Activated B cell treated with CpG ODN at 0.5 μM for 24 hours (primary cell): ENCODE measurements at regions of chr11 and their contacts with region 1.

Region 1: GRCh38 chr11:9757809-9758636 is 94.1 kb downstream of the SWAP70 start:
- DNase-seq: peak; percentile 96
- ATAC-seq: peak; percentile 59
- H3K4me3 Mint-ChIP-seq: peak overlapping the region; percentile 87
- H3K27ac Mint-ChIP-seq: peak overlapping the region; percentile 98
- H3K4me1 Mint-ChIP-seq: peaks cover 81% of the 10 kb centered on the region
- H3K27me3 Mint-ChIP-seq: no peaks in the 10 kb centered on the region
- CTCF ChIP-seq: peak; percentile 47

Region 2: GRCh38 chr11:8911029-8911826 is 846.8 kb before region 1 on chr11 and contains the start of gene AKIP1:
- CTCF ChIA-PET with region 1: no interaction called
- POLR2A ChIA-PET with region 1: no interaction called
- intact Hi-C with region 1: loop called (anchors 5 kb)
- DNase-seq: peak; percentile 70
- ATAC-seq: peak; percentile 77
- H3K4me3 Mint-ChIP-seq: peak within 1 kb of the TSS; percentile 89
- H3K27ac Mint-ChIP-seq: peak within 1 kb of the TSS; percentile 59
- H3K4me1 Mint-ChIP-seq: peaks cover 37% of the 10 kb centered on the region
- H3K27me3 Mint-ChIP-seq: no peaks in the 10 kb centered on the region
- CTCF ChIP-seq: no peak
- total RNA-seq, gene AKIP1: 7.1 and 9.0 TPM in 2 replicates

Region 3: DNA sequence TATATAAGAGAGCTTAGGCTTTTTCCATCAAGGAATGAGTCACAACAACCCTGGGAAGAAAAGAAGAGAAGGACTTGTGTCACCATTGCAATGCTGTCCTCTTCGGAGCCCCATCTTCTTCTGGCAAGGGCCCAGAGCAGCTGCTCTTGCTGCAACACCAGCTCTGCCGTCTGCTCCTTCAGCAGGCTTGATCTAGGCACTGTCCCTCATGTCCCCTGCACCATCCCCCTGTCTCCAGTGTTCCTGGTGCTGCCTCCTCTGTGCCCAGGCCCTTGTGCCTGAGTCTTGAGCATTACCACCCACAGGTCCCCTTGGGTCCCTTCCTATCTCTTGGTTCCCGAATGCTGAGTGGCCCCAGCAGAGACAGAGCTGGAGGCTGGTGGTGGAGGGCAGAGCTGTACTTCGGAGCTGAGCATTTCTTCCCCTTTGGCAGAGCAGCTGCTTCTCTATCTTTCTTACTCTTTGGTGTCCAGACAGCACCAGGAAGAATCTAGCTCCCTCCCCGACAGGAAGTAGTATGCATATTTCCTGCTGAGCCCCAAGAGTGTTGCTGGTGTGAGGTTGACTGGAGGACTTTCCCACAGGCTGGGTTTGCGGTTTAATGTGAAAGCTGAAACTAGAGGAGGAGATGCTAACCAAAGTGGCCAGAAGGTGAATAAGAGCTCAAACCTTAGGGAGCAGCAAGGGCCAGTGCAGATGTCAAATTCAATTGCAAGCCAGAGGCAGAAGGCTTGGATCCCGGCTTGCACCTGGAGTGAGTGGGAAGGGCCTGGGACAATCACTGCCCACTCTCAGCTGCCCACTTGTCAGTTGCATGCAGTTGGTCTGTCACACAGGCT is 156.8 kb before region 1 on chr11:
- CTCF ChIA-PET with region 1: interaction called, 7 read pairs
- POLR2A ChIA-PET with region 1: interaction called, 19 read pairs
- intact Hi-C with region 1: no loop called
- DNase-seq: peak; percentile 53
- ATAC-seq: peak; percentile 76
- H3K4me3 Mint-ChIP-seq: peak overlapping the region; percentile 85
- H3K27ac Mint-ChIP-seq: peak overlapping the region; percentile 96
- H3K4me1 Mint-ChIP-seq: peaks cover 59% of the 10 kb centered on the region
- H3K27me3 Mint-ChIP-seq: no peaks in the 10 kb centered on the region
- CTCF ChIP-seq: no peak

Region 4: GRCh38 chr11:10076458-10077141 is 318.6 kb after region 1 on chr11:
- CTCF ChIA-PET with region 1: interaction called, 21 read pairs
- POLR2A ChIA-PET with region 1: interaction called, 4 read pairs
- intact Hi-C with region 1: loop called (anchors 1 kb)
- DNase-seq: peak; percentile 28
- ATAC-seq: peak; percentile 49
- H3K4me3 Mint-ChIP-seq: no peak overlapping the region
- H3K27ac Mint-ChIP-seq: no peak overlapping the region
- H3K4me1 Mint-ChIP-seq: no peaks in the 10 kb centered on the region
- H3K27me3 Mint-ChIP-seq: no peaks in the 10 kb centered on the region
- CTCF ChIP-seq: no peak

Region 5: GRCh38 chr11:10314199-10315072 is 556.4 kb after region 1 on chr11:
- CTCF ChIA-PET with region 1: interaction called, 21 read pairs
- POLR2A ChIA-PET with region 1: interaction called, 25 read pairs
- intact Hi-C with region 1: no loop called
- DNase-seq: no peak
- ATAC-seq: peak; percentile 80
- H3K4me3 Mint-ChIP-seq: no peak overlapping the region
- H3K27ac Mint-ChIP-seq: no peak overlapping the region
- H3K4me1 Mint-ChIP-seq: peaks cover 28% of the 10 kb centered on the region
- H3K27me3 Mint-ChIP-seq: peaks cover 2% of the 10 kb centered on the region
- CTCF ChIP-seq: no peak

Region 6: GRCh38 chr11:10735481-10736475 is 977.8 kb after region 1 on chr11:
- CTCF ChIA-PET with region 1: no interaction called
- POLR2A ChIA-PET with region 1: no interaction called
- intact Hi-C with region 1: loop called (anchors 5 kb)
- DNase-seq: peak; percentile 93
- ATAC-seq: peak; percentile 100
- H3K4me3 Mint-ChIP-seq: peak overlapping the region; percentile 77
- H3K27ac Mint-ChIP-seq: peak overlapping the region; percentile 83
- H3K4me1 Mint-ChIP-seq: peaks cover 13% of the 10 kb centered on the region
- H3K27me3 Mint-ChIP-seq: no peaks in the 10 kb centered on the region
- CTCF ChIP-seq: peak; percentile 65